ENCODE measurements at regions of chr3 and their contacts with region 1.

Region 1: GRCh38 chr3:133892541-133893231 is 3.0 kb downstream of the RAB6B start:
- DNase-seq: peak in 2 of 4 experiments; percentile 74 to 81
- ATAC-seq: peak; percentile 75
- H3K4me3 ChIP-seq: no peak overlapping the region
- H3K27ac ChIP-seq: peak overlapping the region; percentile 52; the same call in 1 of the 3 replicates
- H3K4me1 ChIP-seq: peaks cover 26 to 41% of the 10 kb centered on the region in 2 experiments; a peak in 4 of 5 replicates
- H3K27me3 ChIP-seq: 0 out of 5 replicates have a peak, but pooled peaks cover 0 to 6% of the 10 kb centered on the region in 2 experiments
- CTCF ChIP-seq: no peak
- EP300 ChIP-seq: peak; percentile 22; the same call in 1 of the 2 replicates
- POLR2A ChIP-seq: no peak
- RAD21 ChIP-seq: no peak

Region 2: GRCh38 chr3:133812872-133813271 is 79.8 kb before region 1 on chr3:
- CTCF ChIA-PET with region 1: no interaction called
- POLR2A ChIA-PET with region 1: no interaction called
- in situ Hi-C with region 1: no loop called
- intact Hi-C with region 1: no loop called
- DNase-seq: no peak
- ATAC-seq: no peak
- H3K4me3 ChIP-seq: no peak overlapping the region
- H3K27ac ChIP-seq: no peak overlapping the region
- H3K4me1 ChIP-seq: no peaks in the 10 kb centered on the region
- H3K27me3 ChIP-seq: no peaks in the 10 kb centered on the region
- CTCF ChIP-seq: no peak
- EP300 ChIP-seq: no peak
- POLR2A ChIP-seq: no peak
- RAD21 ChIP-seq: no peak

Region 3: DNA sequence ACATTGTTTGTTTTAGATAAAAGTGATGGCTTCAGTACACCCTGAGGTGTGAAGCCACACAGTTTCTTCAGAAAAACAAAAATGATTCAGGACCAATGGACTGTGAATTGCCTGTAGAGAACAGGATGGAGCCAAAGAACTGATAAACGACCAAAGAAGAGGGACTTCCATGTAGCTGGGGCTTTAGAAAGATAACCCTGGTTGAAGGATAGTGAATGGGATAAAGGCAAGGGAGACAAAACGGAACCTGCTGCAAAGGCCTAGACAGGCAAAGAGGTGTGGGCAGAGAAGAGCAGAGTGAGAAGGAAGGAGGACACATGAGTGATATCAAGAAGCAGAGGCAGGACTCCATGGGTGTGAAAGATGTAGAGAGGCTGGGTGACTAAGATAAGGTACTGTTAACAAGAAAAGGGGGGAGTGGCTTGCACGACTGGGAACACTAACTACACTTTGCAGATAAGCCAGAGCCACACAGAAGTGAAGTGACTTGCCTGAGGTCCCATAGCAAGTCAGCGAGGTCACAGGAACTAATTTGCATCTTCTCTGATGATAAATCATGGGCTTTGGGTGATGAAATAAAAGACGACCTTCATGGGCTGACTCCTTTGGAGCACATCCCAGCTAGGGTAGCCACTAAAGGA is 41.3 kb before region 1 on chr3:
- CTCF ChIA-PET with region 1: no interaction called
- POLR2A ChIA-PET with region 1: interaction called, 5 read pairs
- in situ Hi-C with region 1: no loop called
- intact Hi-C with region 1: loop called (anchors 2 kb)
- DNase-seq: peak; percentile 76 to 92 (median 84)
- ATAC-seq: peak; percentile 90
- H3K4me3 ChIP-seq: no peak overlapping the region
- H3K27ac ChIP-seq: peak overlapping the region; percentile 81
- H3K4me1 ChIP-seq: peaks cover 14 to 62% of the 10 kb centered on the region in 2 experiments; a peak in 3 of 5 replicates
- H3K27me3 ChIP-seq: no peaks in the 10 kb centered on the region
- CTCF ChIP-seq: no peak
- EP300 ChIP-seq: peak; percentile 84
- POLR2A ChIP-seq: no peak
- RAD21 ChIP-seq: no peak

Region 4: GRCh38 chr3:135641761-135642160 is 1749.1 kb after region 1 on chr3:
- CTCF ChIA-PET with region 1: no interaction called
- POLR2A ChIA-PET with region 1: no interaction called
- in situ Hi-C with region 1: no loop called
- intact Hi-C with region 1: no loop called
- DNase-seq: no peak
- ATAC-seq: no peak
- H3K4me3 ChIP-seq: no peak overlapping the region
- H3K27ac ChIP-seq: no peak overlapping the region
- H3K4me1 ChIP-seq: no peaks in the 10 kb centered on the region
- H3K27me3 ChIP-seq: no peaks in the 10 kb centered on the region
- CTCF ChIP-seq: no peak
- EP300 ChIP-seq: no peak
- POLR2A ChIP-seq: no peak
- RAD21 ChIP-seq: no peak